Activated T-helper 2 cell treated with anti-CD3 and anti-CD28 coated beads, Interferon-gamma antibody, Interleukin-2, Interleukin-4, amounts not matched to agents 10 μg/mL and 5 μg/mL and 100 μg/mL, durations not matched to agents 14 hours and 24 hours and 36 hours (primary cell): ENCODE measurements at regions of chr2 and their contacts with region 1.

Region 1: GRCh38 chr2:33497221-33497650 is 20.8 kb downstream of the RASGRP3 start:
- DNase-seq: no peak
- H3K4me3 Mint-ChIP-seq: peak overlapping the region; percentile 11
- H3K27ac Mint-ChIP-seq: no peak overlapping the region
- H3K4me1 Mint-ChIP-seq: peaks cover 53% of the 10 kb centered on the region
- H3K27me3 Mint-ChIP-seq: peaks cover 15% of the 10 kb centered on the region

Region 2: DNA sequence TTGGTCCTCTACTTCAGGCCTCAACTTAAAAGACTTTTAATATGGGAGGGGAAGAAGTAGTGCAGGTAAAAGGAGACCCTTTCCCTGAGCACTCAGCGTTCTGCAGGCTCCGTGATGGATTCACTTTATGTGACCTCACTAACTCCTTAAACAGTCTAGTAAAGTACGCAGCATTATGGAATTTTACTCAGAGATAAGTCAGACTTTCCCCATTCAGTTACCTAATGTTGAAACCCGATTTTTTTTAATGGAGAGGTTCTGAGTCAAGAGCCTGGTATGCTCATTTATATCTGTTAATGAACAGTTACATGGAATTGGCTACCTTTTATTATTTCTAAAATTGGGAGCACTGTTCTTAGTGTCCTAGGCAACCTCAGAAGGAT is 13.3 kb after region 1 on chr2:
- intact Hi-C with region 1: loop called (anchors 2 kb)
- DNase-seq: no peak
- H3K4me3 Mint-ChIP-seq: no peak overlapping the region
- H3K27ac Mint-ChIP-seq: no peak overlapping the region
- H3K4me1 Mint-ChIP-seq: peaks cover 1% of the 10 kb centered on the region
- H3K27me3 Mint-ChIP-seq: peaks cover 8% of the 10 kb centered on the region